ENCODE measurements at regions of chr11 and their contacts with region 1.

Region 1: GRCh38 chr11:73350908-73351636 is 25.1 kb upstream of the RELT start:
- DNase-seq: peak; percentile 73
- ATAC-seq: peak; percentile 66
- H3K4me3 Mint-ChIP-seq: no peak overlapping the region
- H3K27ac Mint-ChIP-seq: no peak overlapping the region
- H3K4me1 Mint-ChIP-seq: peaks cover 14% of the 10 kb centered on the region
- H3K27me3 Mint-ChIP-seq: peaks cover 2% of the 10 kb centered on the region

Region 2: GRCh38 chr11:73307323-73308002 is 43.6 kb before region 1 on chr11:
- CTCF ChIA-PET with region 1: interaction called, 24 read pairs
- POLR2A ChIA-PET with region 1: no interaction called
- DNase-seq: peak; percentile 94
- ATAC-seq: peak; percentile 77
- H3K4me3 Mint-ChIP-seq: peak overlapping the region; percentile 84
- H3K27ac Mint-ChIP-seq: peak overlapping the region; percentile 41
- H3K4me1 Mint-ChIP-seq: peaks cover 10% of the 10 kb centered on the region
- H3K27me3 Mint-ChIP-seq: peaks cover 28% of the 10 kb centered on the region

Region 3: GRCh38 chr11:73366265-73366610 is 15.2 kb after region 1 on chr11:
- CTCF ChIA-PET with region 1: interaction called, 59 read pairs
- POLR2A ChIA-PET with region 1: no interaction called
- DNase-seq: peak; percentile 65
- ATAC-seq: peak; percentile 86
- H3K4me3 Mint-ChIP-seq: peak overlapping the region; percentile 36
- H3K27ac Mint-ChIP-seq: peak overlapping the region; percentile 97
- H3K4me1 Mint-ChIP-seq: peaks cover 35% of the 10 kb centered on the region
- H3K27me3 Mint-ChIP-seq: no peaks in the 10 kb centered on the region

Region 4: DNA sequence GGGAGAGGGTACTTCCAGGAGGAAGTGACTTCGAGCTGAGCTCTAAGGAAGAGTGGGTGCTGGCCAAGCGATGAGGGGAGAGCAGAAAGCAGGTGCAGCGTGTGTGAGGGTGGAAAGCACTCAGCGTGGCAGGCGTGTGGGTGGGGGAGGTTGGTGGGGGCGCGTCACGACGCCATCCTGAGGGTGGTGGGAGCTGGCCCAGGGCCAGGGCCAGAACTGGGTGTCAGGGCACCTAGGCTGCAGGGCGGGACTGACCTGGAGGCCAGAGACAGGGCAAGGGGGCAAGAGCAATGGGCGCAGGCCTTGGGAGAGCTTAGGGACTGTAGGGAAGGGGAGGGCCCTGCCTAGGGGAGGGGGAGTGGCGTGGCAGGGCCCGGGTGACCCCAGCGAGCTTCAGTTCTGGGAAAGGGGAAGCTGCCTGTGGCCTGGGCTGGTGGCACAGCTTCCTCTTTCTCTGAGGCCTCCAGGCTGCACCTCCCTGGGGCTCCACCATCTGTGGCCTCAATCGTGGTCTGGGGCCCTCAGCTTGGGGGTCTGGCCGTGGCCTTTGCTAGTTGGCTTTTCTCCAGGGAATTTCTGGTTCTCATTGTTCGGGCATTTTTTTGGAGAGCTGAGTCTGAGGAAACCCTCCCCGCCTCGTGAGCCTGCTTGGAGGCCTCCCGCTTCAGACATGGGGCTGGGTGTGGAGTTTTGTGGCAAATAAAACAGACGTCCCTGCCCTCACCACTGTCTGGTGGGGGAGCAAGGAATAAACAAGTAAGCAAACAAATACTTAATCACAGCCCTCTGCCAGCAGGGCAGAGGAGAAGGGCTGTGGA is 34.0 kb after region 1 on chr11:
- CTCF ChIA-PET with region 1: interaction called, 75 read pairs
- POLR2A ChIA-PET with region 1: interaction called, 4 read pairs
- DNase-seq: peak; percentile 71
- ATAC-seq: peak; percentile 68
- H3K4me3 Mint-ChIP-seq: peak overlapping the region; percentile 65
- H3K27ac Mint-ChIP-seq: peak overlapping the region; percentile 94
- H3K4me1 Mint-ChIP-seq: peaks cover 88% of the 10 kb centered on the region
- H3K27me3 Mint-ChIP-seq: no peaks in the 10 kb centered on the region

Region 5: GRCh38 chr11:73404048-73404447 is 53.0 kb after region 1 on chr11:
- CTCF ChIA-PET with region 1: interaction called, 58 read pairs
- POLR2A ChIA-PET with region 1: interaction called, 3 read pairs
- DNase-seq: no peak
- ATAC-seq: no peak
- H3K4me3 Mint-ChIP-seq: no peak overlapping the region
- H3K27ac Mint-ChIP-seq: no peak overlapping the region
- H3K4me1 Mint-ChIP-seq: peaks cover 4% of the 10 kb centered on the region
- H3K27me3 Mint-ChIP-seq: no peaks in the 10 kb centered on the region

Region 6: GRCh38 chr11:73585834-73586575 is 234.9 kb after region 1 on chr11:
- CTCF ChIA-PET with region 1: no interaction called
- POLR2A ChIA-PET with region 1: no interaction called
- DNase-seq: no peak
- ATAC-seq: no peak
- H3K4me3 Mint-ChIP-seq: no peak overlapping the region
- H3K27ac Mint-ChIP-seq: no peak overlapping the region
- H3K4me1 Mint-ChIP-seq: peaks cover 12% of the 10 kb centered on the region
- H3K27me3 Mint-ChIP-seq: no peaks in the 10 kb centered on the region

Region 7: DNA sequence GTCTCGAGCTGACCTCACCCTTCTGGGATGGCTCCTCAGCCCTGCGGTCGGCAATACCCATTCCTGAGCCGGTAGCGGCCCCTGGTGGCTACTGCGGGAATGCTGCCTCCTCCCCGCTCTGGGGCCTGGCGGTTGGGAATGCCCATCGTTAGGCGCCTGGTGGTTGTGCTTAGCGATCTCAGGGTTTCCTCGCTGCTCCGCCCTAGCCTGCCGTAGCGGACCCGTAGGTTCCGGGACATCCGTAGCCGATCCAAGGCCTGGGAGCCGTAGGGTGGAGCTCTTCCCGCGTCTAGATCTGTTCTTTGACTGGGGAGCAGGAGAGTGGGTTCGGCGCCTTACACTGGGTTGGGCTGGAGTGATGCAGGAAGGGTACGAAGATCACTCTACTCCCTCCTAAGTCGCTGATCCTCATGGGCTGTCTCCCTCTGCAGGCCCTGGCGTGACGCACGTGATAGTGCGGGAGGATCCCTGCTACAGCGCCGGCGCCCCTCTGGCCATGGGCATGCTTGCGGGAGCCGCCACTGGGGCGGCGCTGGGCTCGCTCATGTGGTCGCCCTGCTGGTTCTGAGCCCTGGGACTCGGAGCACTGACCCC is 310.1 kb after region 1 on chr11:
- CTCF ChIA-PET with region 1: interaction called, 65 read pairs
- POLR2A ChIA-PET with region 1: no interaction called
- DNase-seq: peak; percentile 82
- ATAC-seq: peak; percentile 91
- H3K4me3 Mint-ChIP-seq: peak overlapping the region; percentile 32
- H3K27ac Mint-ChIP-seq: no peak overlapping the region
- H3K4me1 Mint-ChIP-seq: peaks cover 3% of the 10 kb centered on the region
- H3K27me3 Mint-ChIP-seq: no peaks in the 10 kb centered on the region